Mammary epithelial cell (primary cell): ENCODE measurements at regions of chr13 and their contacts with region 1.

Region 1: GRCh38 chr13:78137404-78138142 is 218.9 kb upstream of the EDNRB start:
- DNase-seq: peak; percentile 48
- H3K4me3 ChIP-seq: no peak overlapping the region
- H3K27ac ChIP-seq: no peak overlapping the region
- H3K4me1 ChIP-seq: no peaks in the 10 kb centered on the region
- H3K27me3 ChIP-seq: no peaks in the 10 kb centered on the region
- CTCF ChIP-seq: peak; percentile 72 to 74

Region 2: GRCh38 chr13:78194904-78195639 is 57.5 kb after region 1 on chr13:
- CTCF ChIA-PET with region 1: no interaction called
- dilution Hi-C with region 1: no loop called
- in situ Hi-C with region 1: no loop called
- intact Hi-C with region 1: loop called (anchors 10 kb)
- DNase-seq: no peak
- H3K4me3 ChIP-seq: no peak overlapping the region
- H3K27ac ChIP-seq: no peak overlapping the region
- H3K4me1 ChIP-seq: no peaks in the 10 kb centered on the region
- H3K27me3 ChIP-seq: no peaks in the 10 kb centered on the region
- CTCF ChIP-seq: no peak

Region 3: GRCh38 chr13:78241278-78241919 is 103.8 kb after region 1 on chr13:
- CTCF ChIA-PET with region 1: no interaction called
- dilution Hi-C with region 1: no loop called
- in situ Hi-C with region 1: no loop called
- intact Hi-C with region 1: loop called (anchors 5 kb)
- DNase-seq: no peak
- H3K4me3 ChIP-seq: no peak overlapping the region
- H3K27ac ChIP-seq: no peak overlapping the region
- H3K4me1 ChIP-seq: no peaks in the 10 kb centered on the region
- H3K27me3 ChIP-seq: no peaks in the 10 kb centered on the region
- CTCF ChIP-seq: peak; percentile 52 to 80

Region 4: GRCh38 chr13:78299832-78300623 is 162.5 kb after region 1 on chr13:
- CTCF ChIA-PET with region 1: no interaction called
- dilution Hi-C with region 1: no loop called
- in situ Hi-C with region 1: no loop called
- intact Hi-C with region 1: loop called (anchors 10 kb)
- DNase-seq: no peak
- H3K4me3 ChIP-seq: no peak overlapping the region
- H3K27ac ChIP-seq: no peak overlapping the region
- H3K4me1 ChIP-seq: no peaks in the 10 kb centered on the region
- H3K27me3 ChIP-seq: peaks cover 2% of the 10 kb centered on the region
- CTCF ChIP-seq: no peak

Region 5: DNA sequence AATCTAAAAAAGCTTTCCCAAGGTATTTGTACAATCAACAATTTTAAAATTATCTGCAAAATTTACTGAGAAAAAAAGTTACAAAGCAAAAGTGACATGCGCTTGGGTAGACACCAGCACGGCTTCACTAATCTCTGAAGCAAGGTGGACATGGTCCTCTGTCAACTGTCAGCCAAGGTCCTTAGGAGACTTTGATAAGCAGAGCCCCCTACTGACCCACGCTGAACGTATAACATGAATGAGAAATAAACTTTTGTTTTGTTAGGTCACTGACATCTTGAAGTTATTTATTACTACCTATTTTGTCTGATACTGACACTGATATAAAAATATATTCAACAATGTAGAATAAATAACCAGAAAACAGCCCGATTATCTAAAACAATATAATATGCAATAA is 622.1 kb after region 1 on chr13:
- CTCF ChIA-PET with region 1: no interaction called
- dilution Hi-C with region 1: no loop called
- in situ Hi-C with region 1: no loop called
- intact Hi-C with region 1: loop called (anchors 5 kb)
- DNase-seq: no peak
- H3K4me3 ChIP-seq: no peak overlapping the region
- H3K27ac ChIP-seq: no peak overlapping the region
- H3K4me1 ChIP-seq: no peaks in the 10 kb centered on the region
- H3K27me3 ChIP-seq: peaks cover 2% of the 10 kb centered on the region
- CTCF ChIP-seq: no peak

Region 6: DNA sequence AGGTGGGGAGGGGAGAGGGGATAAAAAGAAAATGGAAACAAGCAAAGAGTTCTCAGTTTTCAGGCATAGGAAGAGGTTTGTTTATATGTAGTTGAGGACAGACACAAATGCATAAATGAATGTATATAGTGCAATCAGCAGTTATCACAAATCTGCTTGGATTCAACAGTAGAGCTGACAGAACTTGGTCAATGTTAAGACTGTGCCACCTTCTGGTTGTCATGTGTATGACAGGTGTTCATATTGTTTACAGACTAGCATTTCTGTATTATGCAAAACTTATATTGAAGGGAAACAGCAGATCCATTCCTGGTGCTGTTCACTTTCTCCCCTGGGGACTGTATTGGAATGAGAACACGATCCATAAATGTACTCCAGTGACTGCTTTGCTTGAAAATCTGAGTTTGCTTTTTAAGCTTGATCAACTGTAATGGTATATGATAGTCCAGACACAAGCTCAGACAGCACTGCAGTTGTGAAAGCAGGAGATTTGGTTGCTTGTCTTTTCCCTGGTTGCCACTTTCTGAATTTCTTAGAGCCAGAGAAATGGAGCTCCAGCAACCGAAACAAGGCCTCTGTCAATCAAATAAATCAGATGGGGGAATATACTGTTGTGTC is 840.9 kb after region 1 on chr13:
- CTCF ChIA-PET with region 1: interaction called, 5 read pairs
- dilution Hi-C with region 1: no loop called
- in situ Hi-C with region 1: loop called in 1 of 2 experiments (anchors 10 kb)
- intact Hi-C with region 1: loop called (anchors 1 kb)
- DNase-seq: peak; percentile 37
- H3K4me3 ChIP-seq: no peak overlapping the region
- H3K27ac ChIP-seq: no peak overlapping the region
- H3K4me1 ChIP-seq: no peaks in the 10 kb centered on the region
- H3K27me3 ChIP-seq: peaks cover 6% of the 10 kb centered on the region
- CTCF ChIP-seq: peak; percentile 64 to 74

Region 7: DNA sequence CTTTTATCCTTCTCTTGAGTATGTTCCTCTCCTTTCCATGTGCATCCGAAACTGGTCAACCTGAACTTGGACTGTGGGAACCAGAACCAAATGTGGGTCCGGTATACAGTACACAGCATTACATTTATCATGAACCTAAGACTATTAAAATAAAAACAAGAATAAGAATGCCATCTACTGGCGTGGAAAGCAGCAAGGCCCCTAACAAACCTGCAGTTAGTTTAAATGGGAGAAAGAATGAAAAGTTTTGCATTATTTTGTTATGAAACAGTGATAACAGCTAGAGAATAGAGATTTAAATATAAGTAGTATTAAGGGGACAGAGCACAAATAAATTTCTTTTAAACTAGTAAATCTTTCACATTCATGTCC is 1109.0 kb after region 1 on chr13:
- CTCF ChIA-PET with region 1: no interaction called
- dilution Hi-C with region 1: no loop called
- in situ Hi-C with region 1: no loop called
- intact Hi-C with region 1: loop called (anchors 1 kb)
- DNase-seq: no peak
- H3K4me3 ChIP-seq: no peak overlapping the region
- H3K27ac ChIP-seq: no peak overlapping the region
- H3K4me1 ChIP-seq: no peaks in the 10 kb centered on the region
- H3K27me3 ChIP-seq: no peaks in the 10 kb centered on the region
- CTCF ChIP-seq: peak; percentile 17 to 41